ENCODE measurements at regions of chr10 and their contacts with region 1.

Region 1: GRCh38 chr10:90047243-90047729 is 345.9 kb downstream of the KIF20B start:
- DNase-seq: no peak
- ATAC-seq: peak; percentile 82
- H3K4me3 Mint-ChIP-seq: peak overlapping the region; percentile 68
- H3K27ac Mint-ChIP-seq: peak overlapping the region; percentile 94
- H3K4me1 Mint-ChIP-seq: peaks cover 44% of the 10 kb centered on the region
- H3K27me3 Mint-ChIP-seq: no peaks in the 10 kb centered on the region
- CTCF ChIP-seq: no peak

Region 2: GRCh38 chr10:89992575-89992974 is 54.7 kb before region 1 on chr10:
- CTCF ChIA-PET with region 1: no interaction called
- POLR2A ChIA-PET with region 1: no interaction called
- intact Hi-C with region 1: loop called (anchors 5 kb)
- DNase-seq: no peak
- ATAC-seq: no peak
- H3K4me3 Mint-ChIP-seq: no peak overlapping the region
- H3K27ac Mint-ChIP-seq: no peak overlapping the region
- H3K4me1 Mint-ChIP-seq: no peaks in the 10 kb centered on the region
- H3K27me3 Mint-ChIP-seq: no peaks in the 10 kb centered on the region
- CTCF ChIP-seq: no peak

Measured in activated B cell treated with CpG ODN at 0.5 μM for 24 hours (primary cell).